Activated CD4-positive, alpha-beta memory T cell treated with anti-CD3 and anti-CD28 coated beads for 36 hours (primary cell): ENCODE measurements at regions of chr4 and their contacts with region 1.

Region 1: DNA sequence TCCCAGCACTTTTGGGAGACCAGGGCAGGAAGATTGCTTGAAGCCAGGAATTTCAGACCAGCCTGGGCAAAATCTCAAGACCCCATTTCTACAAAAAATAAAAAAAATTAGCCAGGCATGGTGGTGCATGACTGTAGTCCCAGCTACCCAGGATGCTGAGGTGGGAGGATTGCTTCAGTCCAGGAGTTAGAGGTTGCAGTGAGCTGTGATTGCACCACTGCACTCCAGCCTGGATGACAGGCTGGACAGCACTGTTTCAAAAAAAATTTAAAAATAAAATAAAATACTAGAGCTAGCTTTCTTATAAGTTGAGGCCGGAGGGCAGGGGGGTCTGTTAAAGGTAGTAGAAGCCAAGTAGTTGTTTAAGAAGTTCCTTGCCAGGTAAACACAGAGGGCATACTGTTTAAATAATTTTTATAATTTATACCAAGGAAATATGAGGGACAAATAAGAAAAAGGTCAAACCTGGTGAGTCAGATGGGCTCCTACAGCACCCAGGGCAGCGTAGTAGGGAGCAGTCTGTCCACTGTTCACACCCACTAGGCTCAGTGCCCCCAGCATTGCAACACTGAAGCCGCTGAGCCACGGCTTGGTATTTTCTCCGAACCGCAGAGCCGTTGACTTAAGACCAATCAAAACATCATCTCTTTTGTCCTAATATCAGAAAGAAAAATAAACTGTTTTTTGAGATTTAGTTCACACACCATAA is 17.3 kb downstream of the COQ2 start:
- DNase-seq: no peak
- H3K4me3 Mint-ChIP-seq: no peak overlapping the region
- H3K27ac Mint-ChIP-seq: no peak overlapping the region
- H3K4me1 Mint-ChIP-seq: peaks cover 13% of the 10 kb centered on the region
- H3K27me3 Mint-ChIP-seq: no peaks in the 10 kb centered on the region

Region 2: DNA sequence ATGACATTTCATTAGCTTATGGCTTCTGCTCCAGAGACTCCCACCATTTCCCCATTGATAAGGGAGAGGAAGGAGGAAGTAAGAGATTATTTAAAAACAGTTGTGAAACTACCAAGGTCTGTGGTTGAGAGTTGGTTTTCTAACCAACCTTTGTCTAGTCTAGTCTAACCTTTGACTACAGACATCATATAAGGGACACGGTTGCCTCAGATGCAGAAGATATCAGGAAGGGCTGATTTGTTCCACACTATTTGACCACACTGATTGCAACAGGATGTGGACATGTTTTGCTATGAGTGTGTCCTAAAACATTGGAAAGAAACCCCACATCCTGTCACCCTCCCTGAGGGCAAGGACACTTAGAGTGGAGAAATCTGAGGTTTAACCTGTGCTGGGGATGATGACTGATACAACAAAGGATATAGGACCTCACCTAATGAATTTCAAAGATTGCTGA is 35.6 kb before region 1 on chr4:
- CTCF ChIA-PET with region 1: interaction called, 6 read pairs
- POLR2A ChIA-PET with region 1: no interaction called
- intact Hi-C with region 1: loop called (anchors 5 kb)
- DNase-seq: peak; percentile 51
- H3K4me3 Mint-ChIP-seq: no peak overlapping the region
- H3K27ac Mint-ChIP-seq: peak overlapping the region; percentile 43
- H3K4me1 Mint-ChIP-seq: peaks cover 43% of the 10 kb centered on the region
- H3K27me3 Mint-ChIP-seq: peaks cover 29% of the 10 kb centered on the region

Region 3: DNA sequence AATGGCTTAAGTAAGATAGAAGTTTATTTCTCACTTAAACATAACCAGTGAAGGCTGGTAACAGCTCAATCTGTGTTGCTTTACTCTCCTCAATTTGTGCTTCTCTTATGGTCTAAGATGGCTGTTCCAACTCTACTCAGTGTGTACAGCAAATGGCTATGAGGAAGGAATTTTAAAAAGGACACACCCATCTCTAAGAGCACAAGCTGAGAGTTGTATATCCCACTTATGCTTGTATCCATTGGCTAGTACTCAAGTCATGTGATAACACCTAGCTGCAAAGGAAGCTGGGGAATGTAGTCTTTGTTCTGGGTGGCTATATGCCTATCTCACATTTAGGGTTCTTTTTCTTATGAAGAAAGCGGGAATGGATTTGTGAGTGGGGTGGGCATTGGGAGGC is 331.9 kb after region 1 on chr4:
- CTCF ChIA-PET with region 1: no interaction called
- POLR2A ChIA-PET with region 1: no interaction called
- intact Hi-C with region 1: no loop called
- DNase-seq: no peak
- H3K4me3 Mint-ChIP-seq: no peak overlapping the region
- H3K27ac Mint-ChIP-seq: no peak overlapping the region
- H3K4me1 Mint-ChIP-seq: no peaks in the 10 kb centered on the region
- H3K27me3 Mint-ChIP-seq: no peaks in the 10 kb centered on the region